Left colon (tissue), 2 donors: ENCODE measurements at regions of chr6 and their contacts with region 1.

Region 1: DNA sequence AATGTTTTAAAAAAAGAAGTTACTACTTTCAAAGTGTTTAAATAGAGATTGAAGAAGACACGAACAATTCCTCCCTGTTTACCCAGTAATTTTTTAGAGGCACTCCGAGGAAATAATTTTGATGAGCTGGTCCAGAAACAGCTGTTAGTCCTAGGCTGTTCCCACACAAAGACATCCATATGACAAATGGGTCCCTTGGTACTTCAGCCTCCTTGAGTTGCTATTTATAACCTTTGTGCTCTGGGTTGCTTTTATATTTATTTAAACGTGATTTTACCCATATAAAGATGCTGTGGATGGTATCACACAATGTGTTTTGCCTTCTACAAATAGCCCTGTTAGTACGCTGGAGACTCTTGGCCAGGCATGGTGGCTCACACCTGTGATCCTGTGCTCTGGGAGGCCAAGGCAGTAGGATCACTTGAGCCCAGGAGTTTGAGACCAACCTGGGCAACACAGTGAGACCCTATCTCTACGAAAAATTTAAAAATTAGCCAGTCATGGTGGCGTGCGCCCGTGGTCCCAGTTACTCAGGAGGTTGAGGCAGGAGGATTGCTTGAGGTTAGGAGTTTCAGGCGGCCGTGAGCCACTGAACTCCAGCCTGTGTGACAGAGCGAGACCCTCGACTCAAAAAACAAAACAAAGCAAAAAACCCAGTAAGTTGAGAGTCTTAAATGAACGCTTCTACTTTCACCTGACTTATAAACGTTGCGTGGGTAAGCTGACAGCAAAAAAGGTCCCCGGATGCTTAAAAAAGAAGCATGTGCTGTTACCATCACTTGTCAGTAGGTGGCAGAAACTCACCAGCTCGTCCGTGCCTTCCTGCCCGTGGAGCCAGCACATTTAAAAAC is 56.9 kb upstream of the ARMH2 start:
- DNase-seq: peak in 1 of 2 donors; percentile 55
- ATAC-seq: peak; percentile 81

Region 2: GRCh38 chr6:24699521-24700359 is 155.9 kb before region 1 on chr6:
- intact Hi-C with region 1: no loop called
- DNase-seq: no peak
- ATAC-seq: no peak

Region 3: GRCh38 chr6:24991810-24992467 is 136.3 kb after region 1 on chr6:
- intact Hi-C with region 1: loop called in 1 of 2 experiments (anchors 10 kb)
- DNase-seq: peak in 1 of 2 donors; percentile 37
- ATAC-seq: peak; percentile 84

Region 4: GRCh38 chr6:25070547-25071366 is 215.1 kb after region 1 on chr6:
- intact Hi-C with region 1: loop called (anchors 2 to 10 kb)
- DNase-seq: peak; percentile 63 to 80
- ATAC-seq: peak; percentile 87

Region 5: DNA sequence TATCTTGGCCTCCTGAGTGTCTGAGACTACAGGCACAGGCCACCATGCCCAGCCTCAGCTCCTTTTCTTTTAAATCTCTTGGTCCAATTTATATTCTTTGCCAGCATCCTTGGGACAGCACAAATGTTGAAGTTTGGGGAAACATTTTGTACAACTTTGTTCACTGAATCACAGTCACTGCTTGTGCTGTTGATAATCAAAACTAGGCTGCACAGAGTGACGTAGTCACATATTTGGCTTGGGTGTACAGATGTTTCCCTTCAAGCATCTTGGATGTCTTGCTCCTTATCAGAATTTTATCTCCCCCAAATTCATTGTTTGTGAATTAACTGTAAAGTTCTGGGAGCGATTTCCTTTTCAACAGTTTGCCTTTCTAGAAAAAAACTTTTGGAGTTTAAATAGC is 441.4 kb after region 1 on chr6:
- intact Hi-C with region 1: no loop called
- DNase-seq: no peak
- ATAC-seq: no peak